Mucosa of descending colon (tissue), 3 donors: ENCODE measurements at regions of chr17 and their contacts with region 1.

Region 1: DNA sequence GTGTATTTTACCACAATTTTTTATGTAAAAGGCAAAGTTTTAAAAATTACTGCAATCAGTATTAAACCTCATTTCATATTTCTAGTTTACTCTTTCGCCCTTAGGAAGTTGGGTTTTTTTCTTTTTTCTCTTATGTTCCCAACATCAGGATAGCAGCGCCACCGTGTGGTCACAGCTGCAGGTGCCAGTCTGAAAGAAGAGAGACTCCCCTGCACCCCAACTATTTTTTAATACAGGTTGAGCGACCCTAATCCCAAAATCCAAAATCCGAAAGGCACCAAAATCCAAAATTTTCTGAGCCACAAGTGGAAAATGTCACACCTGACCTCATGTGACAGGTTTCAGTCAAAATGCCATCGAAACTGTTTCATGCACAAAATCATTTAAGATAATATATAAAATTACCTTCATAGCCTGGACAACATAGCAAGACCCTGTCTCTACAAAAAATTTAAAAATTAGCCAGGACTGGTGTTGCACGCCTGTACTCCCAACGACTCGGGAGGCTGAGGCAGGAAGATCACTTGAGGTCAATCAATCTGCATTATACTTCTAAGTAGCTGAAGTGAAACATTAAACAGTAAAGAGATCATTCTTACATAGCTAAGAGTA is 21.8 kb upstream of the ASGR2 start:
- DNase-seq: peak; percentile 71 to 91 (median 77)
- ATAC-seq: no peak
- H3K4me3 ChIP-seq: no peak overlapping the region
- H3K4me1 ChIP-seq: peaks cover 9% of the 10 kb centered on the region
- CTCF ChIP-seq: peak; percentile 67

Region 2: DNA sequence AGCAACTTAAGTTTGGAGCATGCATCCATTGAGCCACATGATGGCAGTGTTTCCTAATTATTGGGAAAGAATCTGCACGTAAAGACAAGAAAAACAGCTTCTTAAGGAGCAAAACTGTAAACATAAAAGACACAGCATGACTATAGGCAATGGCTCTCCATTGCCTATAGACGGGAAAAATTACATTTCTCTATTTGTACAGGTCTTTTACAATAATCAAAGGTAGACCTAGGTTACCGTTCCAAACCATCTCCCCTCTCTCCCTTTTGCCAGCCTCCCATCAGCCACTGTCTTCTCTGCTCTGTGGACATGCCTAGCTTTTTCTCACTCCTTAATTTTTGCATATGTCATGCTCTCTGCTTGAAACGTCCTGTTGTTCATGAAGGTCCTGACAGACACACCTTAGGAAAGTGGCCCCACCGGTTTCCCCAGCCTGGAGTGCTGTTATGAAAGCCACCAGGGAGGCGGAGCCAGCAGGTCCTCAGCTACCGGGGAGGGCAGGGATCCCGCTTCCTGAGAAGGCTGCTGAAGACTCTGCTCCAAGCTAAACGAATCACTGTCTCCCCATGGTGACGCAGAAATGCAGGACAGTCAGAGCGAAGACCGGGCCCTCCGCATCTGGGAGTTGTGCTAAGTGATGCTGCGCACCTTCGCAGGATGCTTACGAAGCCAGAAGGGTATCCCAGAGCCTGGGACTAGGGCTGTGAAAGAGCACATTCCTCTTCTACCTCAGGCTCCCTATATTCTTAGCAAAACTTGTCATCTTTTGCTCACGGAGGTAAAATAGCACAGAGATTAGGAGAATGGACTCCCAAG is 90.3 kb before region 1 on chr17:
- intact Hi-C with region 1: loop called (anchors 5 kb)
- DNase-seq: peak; percentile 91 to 97 (median 93)
- ATAC-seq: peak; percentile 87
- H3K4me3 ChIP-seq: no peak overlapping the region
- H3K4me1 ChIP-seq: peaks cover 37% of the 10 kb centered on the region
- CTCF ChIP-seq: peak; percentile 73

Region 3: GRCh38 chr17:7072406-7072805 is 64.0 kb before region 1 on chr17:
- intact Hi-C with region 1: no loop called
- DNase-seq: no peak
- ATAC-seq: no peak
- H3K4me3 ChIP-seq: no peak overlapping the region
- H3K4me1 ChIP-seq: no peaks in the 10 kb centered on the region
- CTCF ChIP-seq: no peak